Activated B cell treated with CpG ODN at 0.5 μM for 24 hours (primary cell): ENCODE measurements at regions of chr10 and their contacts with region 1.

Region 1: GRCh38 chr10:102796407-102797176 is 40.6 kb downstream of the CYP17A1 start:
- DNase-seq: peak; percentile 51
- ATAC-seq: peak; percentile 99
- H3K4me3 Mint-ChIP-seq: peak overlapping the region; percentile 68
- H3K27ac Mint-ChIP-seq: peak overlapping the region; percentile 88
- H3K4me1 Mint-ChIP-seq: peaks cover 47% of the 10 kb centered on the region
- H3K27me3 Mint-ChIP-seq: no peaks in the 10 kb centered on the region
- CTCF ChIP-seq: no peak

Region 2: DNA sequence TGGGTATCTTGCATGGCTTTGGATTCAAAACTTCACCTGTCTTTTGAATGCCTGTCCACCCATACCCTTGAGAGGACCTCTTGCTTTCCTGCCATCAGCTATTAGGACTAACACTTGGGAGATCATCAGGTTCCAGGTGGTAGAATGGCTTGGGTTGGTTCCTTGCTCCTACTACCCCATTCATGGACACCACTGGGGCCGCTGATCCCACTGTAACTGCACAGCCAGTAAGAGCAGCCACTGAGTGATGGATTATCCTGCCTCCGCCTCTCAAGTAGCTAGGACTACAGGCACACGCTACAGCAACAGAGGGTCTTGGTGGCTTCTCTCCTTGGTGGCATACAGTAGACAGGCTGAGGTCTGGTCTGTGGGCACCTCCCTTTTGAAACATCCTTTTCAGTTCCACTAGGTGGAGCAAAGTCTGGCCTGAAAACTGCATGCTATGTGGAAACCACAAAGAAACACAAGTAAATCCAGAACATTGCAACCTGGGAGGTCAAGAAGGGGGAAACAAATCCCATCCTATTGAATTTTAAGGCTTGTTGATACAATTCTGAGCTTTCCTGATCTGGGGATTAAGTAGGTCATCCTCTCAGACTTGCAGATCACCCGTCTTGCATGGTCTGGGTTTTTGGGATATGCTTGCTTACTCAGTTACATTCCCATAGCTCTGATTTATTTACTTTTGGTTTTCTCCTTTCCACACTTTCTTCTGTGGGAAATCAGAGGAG is 43.5 kb before region 1 on chr10:
- CTCF ChIA-PET with region 1: interaction called, 3 read pairs
- POLR2A ChIA-PET with region 1: no interaction called
- intact Hi-C with region 1: loop called (anchors 1 kb)
- DNase-seq: no peak
- ATAC-seq: peak; percentile 67
- H3K4me3 Mint-ChIP-seq: no peak overlapping the region
- H3K27ac Mint-ChIP-seq: no peak overlapping the region
- H3K4me1 Mint-ChIP-seq: peaks cover 49% of the 10 kb centered on the region
- H3K27me3 Mint-ChIP-seq: no peaks in the 10 kb centered on the region
- CTCF ChIP-seq: no peak

Region 3: DNA sequence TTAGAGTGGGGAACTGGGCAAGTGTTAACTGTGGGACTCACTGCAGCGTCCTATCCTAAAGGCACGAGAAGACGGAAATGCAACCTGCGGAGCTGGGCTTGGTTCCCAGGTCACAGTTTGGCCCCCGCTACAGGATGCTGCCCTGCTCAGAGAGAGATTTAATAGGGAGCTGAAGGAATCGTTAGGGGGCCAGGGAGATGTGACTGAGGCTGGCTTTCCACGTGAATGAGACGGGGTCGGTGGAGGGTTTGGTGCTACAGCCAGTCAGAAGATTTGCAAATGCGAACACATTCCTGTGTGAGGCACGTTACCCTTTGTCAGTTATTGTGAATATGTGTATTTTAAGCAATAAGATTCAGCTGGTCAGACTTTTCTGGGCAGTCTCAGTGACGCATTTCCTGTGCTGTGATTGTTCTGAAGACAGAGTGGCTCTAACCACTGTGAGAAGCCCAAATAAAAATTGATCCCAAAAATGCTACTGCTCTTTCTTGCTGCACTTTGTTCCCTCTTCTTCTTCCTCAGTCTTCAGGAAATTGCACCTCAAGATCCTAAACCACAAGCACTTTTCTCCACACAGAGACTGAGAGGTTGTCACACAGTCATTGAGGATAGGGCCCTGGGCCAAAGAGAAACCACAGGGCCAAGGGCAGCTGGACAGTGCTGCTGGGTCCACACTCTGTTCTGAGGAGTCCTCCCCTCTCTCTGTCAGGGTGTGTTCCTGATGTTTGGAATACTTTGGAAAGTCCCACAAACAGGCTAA is 19.4 kb after region 1 on chr10:
- CTCF ChIA-PET with region 1: no interaction called
- POLR2A ChIA-PET with region 1: no interaction called
- intact Hi-C with region 1: loop called (anchors 2 kb)
- DNase-seq: no peak
- ATAC-seq: no peak
- H3K4me3 Mint-ChIP-seq: no peak overlapping the region
- H3K27ac Mint-ChIP-seq: peak overlapping the region; percentile 61
- H3K4me1 Mint-ChIP-seq: peaks cover 50% of the 10 kb centered on the region
- H3K27me3 Mint-ChIP-seq: no peaks in the 10 kb centered on the region
- CTCF ChIP-seq: no peak

Region 4: DNA sequence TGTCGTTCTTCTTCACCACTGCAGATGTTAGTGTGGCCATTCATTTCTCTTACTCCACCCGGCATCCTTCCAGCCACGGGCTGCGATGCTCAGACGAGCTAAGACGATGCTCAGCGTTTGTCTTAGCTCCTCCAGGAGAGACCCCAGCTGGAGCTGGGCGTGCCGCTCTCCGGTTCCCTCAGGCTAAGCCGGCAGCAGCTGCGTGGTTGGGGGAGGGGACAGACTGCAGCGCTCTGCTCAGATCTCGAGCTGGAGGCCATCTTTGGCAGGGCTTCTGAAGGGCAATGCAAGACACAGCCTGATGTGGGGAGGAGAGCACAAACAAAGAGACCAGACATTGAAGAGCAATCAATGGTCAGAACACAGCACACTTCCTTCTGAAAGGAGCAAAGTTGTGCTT is 485.2 kb after region 1 on chr10:
- CTCF ChIA-PET with region 1: no interaction called
- POLR2A ChIA-PET with region 1: no interaction called
- intact Hi-C with region 1: no loop called
- DNase-seq: no peak
- ATAC-seq: no peak
- H3K4me3 Mint-ChIP-seq: no peak overlapping the region
- H3K27ac Mint-ChIP-seq: no peak overlapping the region
- H3K4me1 Mint-ChIP-seq: peaks cover 6% of the 10 kb centered on the region
- H3K27me3 Mint-ChIP-seq: peaks cover 52% of the 10 kb centered on the region
- CTCF ChIP-seq: no peak

Region 5: GRCh38 chr10:104435822-104436221 is 1639.2 kb after region 1 on chr10:
- CTCF ChIA-PET with region 1: no interaction called
- POLR2A ChIA-PET with region 1: no interaction called
- intact Hi-C with region 1: no loop called
- DNase-seq: no peak
- ATAC-seq: no peak
- H3K4me3 Mint-ChIP-seq: no peak overlapping the region
- H3K27ac Mint-ChIP-seq: no peak overlapping the region
- H3K4me1 Mint-ChIP-seq: no peaks in the 10 kb centered on the region
- H3K27me3 Mint-ChIP-seq: peaks cover 4% of the 10 kb centered on the region
- CTCF ChIP-seq: no peak